Heart left ventricle (tissue), 16 donors: ENCODE measurements at regions of chr17 and their contacts with region 1.

Region 1: GRCh38 chr17:52899235-52899634 is 740.7 kb upstream of the CA10 start:
- DNase-seq: no peak
- ATAC-seq: no peak
- H3K4me3 ChIP-seq: no peak overlapping the region
- H3K27ac ChIP-seq: no peak overlapping the region
- H3K4me1 ChIP-seq: no peaks in the 10 kb centered on the region
- H3K27me3 ChIP-seq: no peaks in the 10 kb centered on the region
- CTCF ChIP-seq: no peak
- POLR2A ChIP-seq: no peak

Region 2: DNA sequence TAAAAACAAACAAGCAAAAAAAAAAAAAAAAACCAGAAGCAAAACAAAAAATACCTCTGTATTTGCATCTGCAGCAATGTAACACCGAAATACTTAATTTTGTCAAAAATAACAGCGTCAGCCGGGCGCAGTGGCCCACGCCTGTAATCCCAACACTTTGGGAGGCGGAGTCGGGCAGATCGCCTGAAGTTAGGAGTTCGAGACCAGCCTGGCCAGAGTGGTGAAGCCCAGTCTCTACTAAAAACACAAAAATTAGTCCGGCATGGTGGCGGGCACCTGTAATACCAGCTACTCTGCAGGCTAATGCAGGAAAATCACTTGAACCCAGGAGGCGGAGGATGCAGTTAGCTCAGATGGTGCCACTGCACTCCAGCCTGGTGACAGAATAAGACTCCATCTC is 57.3 kb before region 1 on chr17:
- intact Hi-C with region 1: loop called in 1 of 10 experiments (anchors 10 kb)
- DNase-seq: no peak
- ATAC-seq: no peak
- H3K4me3 ChIP-seq: no peak overlapping the region
- H3K27ac ChIP-seq: no peak overlapping the region
- H3K4me1 ChIP-seq: no peaks in the 10 kb centered on the region
- H3K27me3 ChIP-seq: no peaks in the 10 kb centered on the region
- CTCF ChIP-seq: no peak
- POLR2A ChIP-seq: no peak